Naive thymus-derived CD4-positive, alpha-beta T cell (primary cell): ENCODE measurements at regions of chr1 and their contacts with region 1.

Region 1: GRCh38 chr1:23559136-23559984 is at the start of gene ID3:
- DNase-seq: peak; percentile 70 to 96 (median 86)
- ATAC-seq: peak; percentile 77
- H3K4me3 ChIP-seq: peak within 1 kb of the TSS; percentile 94
- H3K4me3 Mint-ChIP-seq: peak within 1 kb of the TSS; percentile 85 to 98 (median 93)
- H3K27ac ChIP-seq: peak within 1 kb of the TSS; percentile 91
- H3K27ac Mint-ChIP-seq: peak within 1 kb of the TSS; percentile 85 to 98 (median 91)
- H3K4me1 ChIP-seq: peaks cover 16 to 41% of the 10 kb centered on the region in 2 donors
- H3K4me1 Mint-ChIP-seq: peaks cover 40 to 80% (median 74%) of the 10 kb centered on the region in 7 donors
- H3K27me3 ChIP-seq: no peaks in the 10 kb centered on the region
- H3K27me3 Mint-ChIP-seq: peaks cover 0 to 46% (median 0%) of the 10 kb centered on the region in 5 donors
- total RNA-seq, gene ID3: 14.8 to 89.4 (median 34.1) TPM

Region 2: GRCh38 chr1:23337869-23338268 is 221.5 kb before region 1 on chr1:
- CTCF ChIA-PET with region 1: no interaction called
- POLR2A ChIA-PET with region 1: no interaction called
- intact Hi-C with region 1: no loop called
- DNase-seq: no peak
- ATAC-seq: no peak
- H3K4me3 ChIP-seq: no peak overlapping the region
- H3K4me3 Mint-ChIP-seq: peak overlapping the region in 3 of 10 donors; percentile 8 to 51 (median 24)
- H3K27ac ChIP-seq: no peak overlapping the region
- H3K27ac Mint-ChIP-seq: peak overlapping the region in 5 of 9 donors; percentile 12 to 69 (median 34)
- H3K4me1 ChIP-seq: peaks cover 35 to 41% of the 10 kb centered on the region in 2 donors
- H3K4me1 Mint-ChIP-seq: peaks cover 40 to 71% (median 58%) of the 10 kb centered on the region in 7 donors
- H3K27me3 ChIP-seq: no peaks in the 10 kb centered on the region
- H3K27me3 Mint-ChIP-seq: no peaks in the 10 kb centered on the region

Region 3: GRCh38 chr1:23530747-23531561 is 28.4 kb before region 1 on chr1 and contains the start of gene E2F2:
- CTCF ChIA-PET with region 1: no interaction called
- POLR2A ChIA-PET with region 1: interaction called, 4 read pairs
- intact Hi-C with region 1: loop called (anchors 2 kb)
- DNase-seq: peak; percentile 61 to 81 (median 78)
- ATAC-seq: peak; percentile 83
- H3K4me3 ChIP-seq: peak within 1 kb of the TSS; percentile 52
- H3K4me3 Mint-ChIP-seq: peak within 1 kb of the TSS; percentile 85 to 97 (median 90)
- H3K27ac ChIP-seq: no peak within 1 kb of the TSS
- H3K27ac Mint-ChIP-seq: peak within 1 kb of the TSS in 7 of 9 donors; percentile 36 to 96 (median 70)
- H3K4me1 ChIP-seq: peaks cover 61 to 71% of the 10 kb centered on the region in 2 donors
- H3K4me1 Mint-ChIP-seq: peaks cover 49 to 76% (median 67%) of the 10 kb centered on the region in 7 donors
- H3K27me3 ChIP-seq: no peaks in the 10 kb centered on the region
- H3K27me3 Mint-ChIP-seq: peaks cover 0 to 4% (median 0%) of the 10 kb centered on the region in 5 donors
- total RNA-seq, gene E2F2: 0.14 to 65.7 (median 2.5) TPM in 4 of 5 experiments, not detected in the other

Region 4: GRCh38 chr1:23548704-23549143 is 10.6 kb before region 1 on chr1:
- CTCF ChIA-PET with region 1: interaction called, 61 read pairs
- POLR2A ChIA-PET with region 1: interaction called, 52 read pairs
- intact Hi-C with region 1: loop called (anchors 1 kb)
- DNase-seq: no peak
- ATAC-seq: no peak
- H3K4me3 ChIP-seq: no peak overlapping the region
- H3K4me3 Mint-ChIP-seq: no peak overlapping the region
- H3K27ac ChIP-seq: no peak overlapping the region
- H3K27ac Mint-ChIP-seq: no peak overlapping the region
- H3K4me1 ChIP-seq: peaks cover 5 to 28% of the 10 kb centered on the region in 2 donors
- H3K4me1 Mint-ChIP-seq: peaks cover 4 to 56% (median 38%) of the 10 kb centered on the region in 7 donors
- H3K27me3 ChIP-seq: no peaks in the 10 kb centered on the region
- H3K27me3 Mint-ChIP-seq: peaks cover 0 to 2% (median 0%) of the 10 kb centered on the region in 5 donors

Region 5: GRCh38 chr1:23585447-23586015 is 26.2 kb after region 1 on chr1:
- CTCF ChIA-PET with region 1: interaction called, 3 read pairs
- POLR2A ChIA-PET with region 1: interaction called, 1,267 read pairs
- intact Hi-C with region 1: loop called in 1 of 2 experiments (anchors 5 kb)
- DNase-seq: no peak
- ATAC-seq: peak; percentile 72
- H3K4me3 ChIP-seq: no peak overlapping the region
- H3K4me3 Mint-ChIP-seq: no peak overlapping the region
- H3K27ac ChIP-seq: no peak overlapping the region
- H3K27ac Mint-ChIP-seq: peak overlapping the region in 2 of 9 donors; percentile 20 to 31
- H3K4me1 ChIP-seq: no peaks in the 10 kb centered on the region
- H3K4me1 Mint-ChIP-seq: peaks cover 9 to 36% (median 24%) of the 10 kb centered on the region in 7 donors
- H3K27me3 ChIP-seq: no peaks in the 10 kb centered on the region
- H3K27me3 Mint-ChIP-seq: no peaks in the 10 kb centered on the region

Region 6: GRCh38 chr1:23598424-23598823 is 39.1 kb after region 1 on chr1:
- CTCF ChIA-PET with region 1: interaction called, 31 read pairs
- POLR2A ChIA-PET with region 1: interaction called, 1,267 read pairs
- intact Hi-C with region 1: loop called (anchors 1 to 5 kb)
- DNase-seq: no peak
- ATAC-seq: no peak
- H3K4me3 ChIP-seq: no peak overlapping the region
- H3K4me3 Mint-ChIP-seq: peak overlapping the region in 5 of 10 donors; percentile 6 to 88 (median 69)
- H3K27ac ChIP-seq: peak overlapping the region; percentile 40
- H3K27ac Mint-ChIP-seq: peak overlapping the region in 6 of 9 donors; percentile 3 to 84 (median 72)
- H3K4me1 ChIP-seq: peaks cover 73 to 92% of the 10 kb centered on the region in 2 donors
- H3K4me1 Mint-ChIP-seq: peaks cover 50 to 97% (median 85%) of the 10 kb centered on the region in 7 donors
- H3K27me3 ChIP-seq: no peaks in the 10 kb centered on the region
- H3K27me3 Mint-ChIP-seq: no peaks in the 10 kb centered on the region

Region 7: DNA sequence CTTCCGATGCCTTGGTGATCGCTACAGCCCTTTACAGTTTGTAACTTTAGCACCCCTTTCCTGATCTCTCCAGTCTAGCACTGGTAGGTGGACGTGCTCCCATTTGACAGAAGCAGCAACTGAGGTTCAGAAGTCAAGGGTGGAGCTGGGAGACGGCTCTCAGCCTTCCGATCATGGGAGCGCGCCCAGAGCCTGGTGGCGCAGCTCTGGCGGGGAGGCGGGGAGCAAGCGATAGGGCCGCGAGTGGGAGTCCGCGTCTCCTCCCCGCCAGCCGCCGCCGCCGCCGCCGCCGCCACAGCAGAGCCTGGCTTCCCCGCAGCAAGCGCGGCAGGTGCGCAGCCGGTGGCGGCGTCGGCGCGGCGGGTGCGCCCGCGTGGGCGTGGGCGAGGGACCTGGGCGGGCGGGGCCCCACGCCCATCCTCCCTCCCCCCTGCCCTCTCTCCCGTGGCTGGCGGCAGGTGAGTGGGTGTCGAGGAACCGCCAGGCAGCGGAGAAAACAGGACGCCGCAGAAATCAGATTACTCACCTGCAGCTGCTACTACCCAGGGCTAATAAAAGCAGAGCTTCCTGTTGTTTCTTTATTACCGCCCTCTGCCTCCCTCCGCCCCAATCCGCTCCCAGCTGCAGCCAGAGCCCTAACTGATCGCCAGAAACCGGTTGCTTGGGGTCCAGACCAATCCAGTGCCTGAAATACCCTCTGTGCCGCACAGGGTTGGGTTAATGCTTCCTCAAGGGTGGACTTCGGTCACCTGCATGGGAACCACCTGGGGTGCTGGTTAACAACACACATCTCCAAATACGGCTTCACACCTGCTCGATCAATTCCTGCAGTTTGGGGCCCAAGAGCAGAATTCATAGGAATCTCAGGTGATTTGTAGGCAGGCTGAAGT is 60.2 kb after region 1 on chr1:
- CTCF ChIA-PET with region 1: interaction called, 643 read pairs
- POLR2A ChIA-PET with region 1: interaction called, 1,267 read pairs
- intact Hi-C with region 1: loop called in 1 of 2 experiments (anchors 1 kb)
- DNase-seq: peak; percentile 58 to 88 (median 84)
- ATAC-seq: peak; percentile 93
- H3K4me3 ChIP-seq: peak overlapping the region; percentile 65
- H3K4me3 Mint-ChIP-seq: peak overlapping the region; percentile 63 to 85 (median 78)
- H3K27ac ChIP-seq: peak overlapping the region; percentile 81
- H3K27ac Mint-ChIP-seq: peak overlapping the region; percentile 84 to 99 (median 97)
- H3K4me1 ChIP-seq: peaks cover 45 to 79% of the 10 kb centered on the region in 2 donors
- H3K4me1 Mint-ChIP-seq: peaks cover 68 to 97% (median 90%) of the 10 kb centered on the region in 7 donors
- H3K27me3 ChIP-seq: no peaks in the 10 kb centered on the region
- H3K27me3 Mint-ChIP-seq: peaks cover 0 to 11% (median 0%) of the 10 kb centered on the region in 5 donors

Region 8: DNA sequence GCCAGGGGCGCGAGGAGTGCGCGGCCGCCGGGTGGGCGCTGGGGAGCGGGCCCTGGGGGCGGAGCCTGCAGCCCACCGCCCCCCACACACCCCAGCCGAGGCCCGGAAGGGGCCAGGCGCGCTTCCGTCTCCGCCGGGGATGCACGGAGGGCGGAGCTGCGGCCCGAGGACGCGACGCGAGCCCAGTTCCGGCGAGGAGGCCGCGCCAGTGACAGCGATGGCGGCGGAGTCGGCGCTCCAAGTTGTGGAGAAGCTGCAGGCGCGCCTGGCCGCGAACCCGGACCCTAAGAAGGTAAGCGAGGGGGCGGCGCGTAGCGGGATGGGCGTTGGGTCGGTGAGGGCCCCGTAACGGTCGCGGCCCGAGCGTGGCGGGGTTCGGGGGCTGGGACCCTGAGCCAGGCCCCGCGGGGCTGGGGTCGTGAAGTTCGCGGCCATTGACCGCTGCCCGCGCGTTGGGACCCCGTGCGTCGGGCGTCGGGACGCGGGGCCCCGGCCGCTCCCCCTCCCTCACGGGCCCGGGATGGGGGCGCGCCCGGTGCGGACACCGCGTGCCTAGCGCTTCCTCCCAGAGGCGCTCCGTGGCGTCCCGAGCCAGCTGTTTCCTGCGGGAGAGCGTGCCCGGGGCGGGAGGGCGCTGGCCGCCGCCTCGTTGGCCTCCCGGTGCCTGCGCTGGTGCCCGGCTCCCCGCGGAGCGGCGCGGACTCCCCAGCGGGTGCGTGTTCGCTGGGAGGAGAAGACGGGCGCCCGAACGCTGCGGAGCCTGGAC is 184.1 kb after region 1 on chr1 and contains the start of gene ELOA:
- CTCF ChIA-PET with region 1: no interaction called
- POLR2A ChIA-PET with region 1: interaction called, 3 read pairs
- intact Hi-C with region 1: loop called (anchors 2 to 10 kb)
- DNase-seq: peak; percentile 68 to 84 (median 77)
- ATAC-seq: peak; percentile 98
- H3K4me3 ChIP-seq: peak within 1 kb of the TSS; percentile 87
- H3K4me3 Mint-ChIP-seq: peak within 1 kb of the TSS; percentile 90 to 93 (median 92)
- H3K27ac ChIP-seq: peak within 1 kb of the TSS; percentile 96
- H3K27ac Mint-ChIP-seq: peak within 1 kb of the TSS; percentile 80 to 95 (median 91)
- H3K4me1 ChIP-seq: peaks cover 22 to 39% of the 10 kb centered on the region in 2 donors
- H3K4me1 Mint-ChIP-seq: peaks cover 35 to 52% (median 49%) of the 10 kb centered on the region in 7 donors
- H3K27me3 ChIP-seq: no peaks in the 10 kb centered on the region
- H3K27me3 Mint-ChIP-seq: no peaks in the 10 kb centered on the region
- total RNA-seq, gene ELOA: 28.0 to 36.1 (median 30.4) TPM